ENCODE measurements at regions of chr19 and their contacts with region 1.

Region 1: DNA sequence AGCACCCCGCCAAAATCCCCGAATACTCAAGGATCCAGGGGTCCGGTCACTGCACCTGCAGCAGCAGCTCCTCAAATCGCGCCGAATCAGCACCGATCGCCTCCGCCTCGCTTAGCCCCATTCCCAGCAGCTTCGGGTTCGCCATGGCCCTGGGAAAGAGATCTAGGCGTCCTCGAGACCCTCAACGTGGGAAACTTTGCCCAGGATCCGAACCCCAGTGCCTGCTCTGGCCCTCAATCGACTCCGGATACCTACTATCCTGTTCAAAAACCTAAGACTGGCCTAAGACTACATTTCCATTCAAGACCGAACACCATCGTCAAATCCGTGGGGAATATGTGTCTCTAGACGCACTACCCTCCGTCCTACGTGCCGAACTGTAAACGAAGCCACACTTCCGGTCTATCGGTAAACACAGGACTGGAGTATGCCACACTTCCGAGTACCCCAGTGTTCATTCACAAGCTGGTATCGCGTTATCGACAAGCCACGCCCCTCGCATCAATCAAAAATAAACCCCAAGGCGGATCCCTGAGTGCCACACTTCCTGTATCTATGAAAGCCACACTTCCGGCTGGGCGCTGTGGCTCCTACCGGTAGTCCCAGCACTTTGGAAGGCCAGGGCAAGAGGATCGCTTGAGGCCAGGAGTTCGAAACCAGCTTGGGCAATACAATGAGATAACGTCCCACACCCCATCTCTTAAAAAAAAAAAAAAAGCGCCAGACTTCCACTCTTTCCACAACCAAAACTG is at the start of gene PIH1D1:
- DNase-seq: peak; percentile 98
- H3K4me3 Mint-ChIP-seq: peak within 1 kb of the TSS; percentile 100
- H3K27ac Mint-ChIP-seq: peak within 1 kb of the TSS; percentile 99
- H3K4me1 Mint-ChIP-seq: peaks cover 38% of the 10 kb centered on the region
- H3K27me3 Mint-ChIP-seq: no peaks in the 10 kb centered on the region
- total RNA-seq, gene PIH1D1: 117 to 129 TPM

Region 2: GRCh38 chr19:49294401-49294800 is 157.2 kb before region 1 on chr19:
- CTCF ChIA-PET with region 1: no interaction called
- POLR2A ChIA-PET with region 1: no interaction called
- intact Hi-C with region 1: no loop called
- DNase-seq: no peak
- H3K4me3 Mint-ChIP-seq: no peak overlapping the region
- H3K27ac Mint-ChIP-seq: no peak overlapping the region
- H3K4me1 Mint-ChIP-seq: no peaks in the 10 kb centered on the region
- H3K27me3 Mint-ChIP-seq: no peaks in the 10 kb centered on the region

Region 3: GRCh38 chr19:49331616-49332055 is 120.0 kb before region 1 on chr19:
- CTCF ChIA-PET with region 1: no interaction called
- POLR2A ChIA-PET with region 1: interaction called, 6 read pairs
- intact Hi-C with region 1: loop called (anchors 5 kb)
- DNase-seq: peak; percentile 80
- H3K4me3 Mint-ChIP-seq: peak overlapping the region; percentile 43
- H3K27ac Mint-ChIP-seq: peak overlapping the region; percentile 99
- H3K4me1 Mint-ChIP-seq: peaks cover 69% of the 10 kb centered on the region
- H3K27me3 Mint-ChIP-seq: no peaks in the 10 kb centered on the region

Region 4: GRCh38 chr19:49347846-49348245 is 103.8 kb before region 1 on chr19:
- CTCF ChIA-PET with region 1: no interaction called
- POLR2A ChIA-PET with region 1: no interaction called
- intact Hi-C with region 1: no loop called
- DNase-seq: peak; percentile 36
- H3K4me3 Mint-ChIP-seq: no peak overlapping the region
- H3K27ac Mint-ChIP-seq: no peak overlapping the region
- H3K4me1 Mint-ChIP-seq: peaks cover 5% of the 10 kb centered on the region
- H3K27me3 Mint-ChIP-seq: no peaks in the 10 kb centered on the region

Region 5: DNA sequence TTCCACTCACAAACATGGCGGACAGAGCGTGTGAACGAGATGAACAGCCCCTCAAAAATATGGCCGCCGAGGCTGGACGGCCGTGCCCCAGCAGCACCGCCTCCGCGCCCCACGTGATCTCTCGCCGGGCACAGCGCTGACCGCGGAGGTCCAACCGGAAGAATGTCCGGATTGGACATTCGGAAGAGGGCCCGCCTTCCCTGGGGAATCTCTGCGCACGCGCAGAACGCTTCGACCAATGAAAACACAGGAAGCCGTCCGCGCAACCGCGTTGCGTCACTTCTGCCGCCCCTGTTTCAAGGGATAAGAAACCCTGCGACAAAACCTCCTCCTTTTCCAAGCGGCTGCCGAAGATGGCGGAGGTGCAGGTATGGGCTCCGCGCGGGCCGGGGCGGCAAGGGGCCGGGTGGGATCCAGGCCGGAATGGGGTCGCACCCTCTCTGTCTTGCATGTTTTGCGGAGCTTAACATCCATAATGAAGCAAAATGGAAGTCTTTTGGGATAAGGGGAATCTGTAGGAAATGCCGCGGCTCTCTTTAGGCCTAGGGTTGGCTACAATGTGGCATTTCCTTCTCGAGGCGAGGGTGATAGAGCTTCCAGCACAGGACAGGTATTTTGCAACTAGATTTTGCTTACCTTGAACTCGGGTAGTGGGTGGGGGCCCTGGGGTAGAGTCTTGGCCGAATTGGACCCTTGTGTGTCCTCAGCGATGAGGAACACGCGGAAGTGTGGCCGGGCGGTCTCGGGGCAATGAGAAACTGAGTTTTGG is 35.9 kb after region 1 on chr19 and contains the start of gene RPL13A:
- CTCF ChIA-PET with region 1: no interaction called
- POLR2A ChIA-PET with region 1: interaction called, 7 read pairs
- intact Hi-C with region 1: loop called (anchors 1 kb)
- DNase-seq: peak; percentile 100
- H3K4me3 Mint-ChIP-seq: peak within 1 kb of the TSS; percentile 94
- H3K27ac Mint-ChIP-seq: peak within 1 kb of the TSS; percentile 97
- H3K4me1 Mint-ChIP-seq: peaks cover 24% of the 10 kb centered on the region
- H3K27me3 Mint-ChIP-seq: peaks cover 3% of the 10 kb centered on the region
- total RNA-seq, gene RPL13A: 4,276 to 4,379 TPM

Region 6: GRCh38 chr19:49497047-49497788 is 45.6 kb after region 1 on chr19:
- CTCF ChIA-PET with region 1: no interaction called
- POLR2A ChIA-PET with region 1: interaction called, 5 read pairs
- intact Hi-C with region 1: loop called (anchors 1 kb)
- DNase-seq: peak; percentile 83
- H3K4me3 Mint-ChIP-seq: peak overlapping the region; percentile 92
- H3K27ac Mint-ChIP-seq: peak overlapping the region; percentile 97
- H3K4me1 Mint-ChIP-seq: peaks cover 49% of the 10 kb centered on the region
- H3K27me3 Mint-ChIP-seq: no peaks in the 10 kb centered on the region